CD4-positive, alpha-beta T cell (primary cell): ENCODE measurements at regions of chr3 and their contacts with region 1.

Region 1: GRCh38 chr3:63818281-63819150 is 583 bp upstream of the C3orf49 start:
- DNase-seq: peak; percentile 26 to 77 (median 49)
- ATAC-seq: peak; percentile 61
- H3K4me3 ChIP-seq: no peak overlapping the region
- H3K4me3 Mint-ChIP-seq: no peak overlapping the region
- H3K27ac ChIP-seq: no peak overlapping the region
- H3K27ac Mint-ChIP-seq: no peak overlapping the region
- H3K4me1 ChIP-seq: no peaks in the 10 kb centered on the region
- H3K4me1 Mint-ChIP-seq: peaks cover 6% of the 10 kb centered on the region
- H3K27me3 ChIP-seq: no peaks in the 10 kb centered on the region
- H3K27me3 Mint-ChIP-seq: no peaks in the 10 kb centered on the region
- CTCF ChIP-seq: peak; percentile 91

Region 2: GRCh38 chr3:62201438-62202035 is 1617.0 kb before region 1 on chr3:
- CTCF ChIA-PET with region 1: interaction called, 4 read pairs
- POLR2A ChIA-PET with region 1: no interaction called
- intact Hi-C with region 1: loop called (anchors 1 to 5 kb)
- DNase-seq: peak in 2 of 14 experiments; percentile 9 to 22
- ATAC-seq: no peak
- H3K4me3 ChIP-seq: no peak overlapping the region
- H3K4me3 Mint-ChIP-seq: no peak overlapping the region
- H3K27ac ChIP-seq: no peak overlapping the region
- H3K27ac Mint-ChIP-seq: no peak overlapping the region
- H3K4me1 ChIP-seq: no peaks in the 10 kb centered on the region
- H3K4me1 Mint-ChIP-seq: no peaks in the 10 kb centered on the region
- H3K27me3 ChIP-seq: no peaks in the 10 kb centered on the region
- H3K27me3 Mint-ChIP-seq: peaks cover 4% of the 10 kb centered on the region
- CTCF ChIP-seq: peak; percentile 45

Region 3: DNA sequence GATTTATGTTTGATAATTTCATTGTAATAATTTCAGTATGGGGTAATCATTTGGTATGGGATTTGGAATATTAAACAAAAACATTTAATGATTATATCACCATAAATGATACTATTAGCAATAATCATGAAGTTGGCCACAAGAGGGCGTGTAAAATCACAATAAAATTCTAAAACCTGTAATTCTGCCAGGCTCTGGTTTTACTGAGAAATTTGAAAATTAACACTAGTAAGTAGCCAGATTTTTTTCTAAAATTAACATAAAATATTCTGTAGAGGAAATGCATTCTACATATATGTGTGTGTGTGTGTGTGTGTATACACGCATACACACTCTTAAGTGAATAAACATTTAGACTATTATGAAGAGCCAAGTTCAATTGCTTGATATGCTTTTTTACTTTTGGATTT is 1485.7 kb before region 1 on chr3:
- CTCF ChIA-PET with region 1: no interaction called
- POLR2A ChIA-PET with region 1: no interaction called
- intact Hi-C with region 1: loop called (anchors 5 kb)
- DNase-seq: peak in 2 of 14 experiments; percentile 3 to 6
- ATAC-seq: no peak
- H3K4me3 ChIP-seq: no peak overlapping the region
- H3K4me3 Mint-ChIP-seq: no peak overlapping the region
- H3K27ac ChIP-seq: no peak overlapping the region
- H3K27ac Mint-ChIP-seq: no peak overlapping the region
- H3K4me1 ChIP-seq: no peaks in the 10 kb centered on the region
- H3K4me1 Mint-ChIP-seq: no peaks in the 10 kb centered on the region
- H3K27me3 ChIP-seq: no peaks in the 10 kb centered on the region
- H3K27me3 Mint-ChIP-seq: no peaks in the 10 kb centered on the region
- CTCF ChIP-seq: peak; percentile 51

Region 4: DNA sequence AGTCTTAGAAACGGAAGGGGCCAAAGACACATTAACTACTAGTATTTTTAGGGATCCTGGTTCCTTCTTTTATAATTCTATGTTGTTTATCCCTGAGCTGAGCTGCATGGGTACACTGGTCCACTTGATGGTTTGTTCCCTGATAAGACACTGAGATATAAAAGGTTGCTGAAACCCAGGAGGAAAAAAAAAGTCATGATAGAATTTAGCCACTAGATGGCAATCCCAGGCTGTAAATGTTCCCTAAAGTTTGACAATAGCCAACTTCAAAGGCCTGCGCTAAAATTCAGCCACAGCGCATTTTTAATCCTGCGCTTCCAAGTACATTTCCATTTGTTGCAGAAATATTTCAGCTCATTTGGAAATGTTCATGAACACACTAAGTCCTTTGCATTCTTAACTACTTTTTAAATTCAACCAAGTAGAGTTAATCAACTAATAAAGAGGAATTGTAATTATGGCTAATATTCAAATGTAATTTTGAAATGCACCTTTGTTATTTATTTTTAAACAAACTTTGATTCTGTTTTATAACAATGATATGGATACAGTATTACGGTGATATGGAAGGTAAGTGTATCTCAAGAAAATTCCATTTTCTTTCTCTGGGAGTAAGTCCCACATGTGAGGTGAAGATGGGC is 1195.8 kb before region 1 on chr3:
- CTCF ChIA-PET with region 1: no interaction called
- POLR2A ChIA-PET with region 1: no interaction called
- intact Hi-C with region 1: loop called in 1 of 2 experiments (anchors 5 kb)
- DNase-seq: peak in 3 of 14 experiments; percentile 12 to 26 (median 19)
- ATAC-seq: no peak
- H3K4me3 ChIP-seq: no peak overlapping the region
- H3K4me3 Mint-ChIP-seq: no peak overlapping the region
- H3K27ac ChIP-seq: no peak overlapping the region
- H3K27ac Mint-ChIP-seq: no peak overlapping the region
- H3K4me1 ChIP-seq: no peaks in the 10 kb centered on the region
- H3K4me1 Mint-ChIP-seq: no peaks in the 10 kb centered on the region
- H3K27me3 ChIP-seq: no peaks in the 10 kb centered on the region
- H3K27me3 Mint-ChIP-seq: peaks cover 10% of the 10 kb centered on the region
- CTCF ChIP-seq: no peak

Region 5: DNA sequence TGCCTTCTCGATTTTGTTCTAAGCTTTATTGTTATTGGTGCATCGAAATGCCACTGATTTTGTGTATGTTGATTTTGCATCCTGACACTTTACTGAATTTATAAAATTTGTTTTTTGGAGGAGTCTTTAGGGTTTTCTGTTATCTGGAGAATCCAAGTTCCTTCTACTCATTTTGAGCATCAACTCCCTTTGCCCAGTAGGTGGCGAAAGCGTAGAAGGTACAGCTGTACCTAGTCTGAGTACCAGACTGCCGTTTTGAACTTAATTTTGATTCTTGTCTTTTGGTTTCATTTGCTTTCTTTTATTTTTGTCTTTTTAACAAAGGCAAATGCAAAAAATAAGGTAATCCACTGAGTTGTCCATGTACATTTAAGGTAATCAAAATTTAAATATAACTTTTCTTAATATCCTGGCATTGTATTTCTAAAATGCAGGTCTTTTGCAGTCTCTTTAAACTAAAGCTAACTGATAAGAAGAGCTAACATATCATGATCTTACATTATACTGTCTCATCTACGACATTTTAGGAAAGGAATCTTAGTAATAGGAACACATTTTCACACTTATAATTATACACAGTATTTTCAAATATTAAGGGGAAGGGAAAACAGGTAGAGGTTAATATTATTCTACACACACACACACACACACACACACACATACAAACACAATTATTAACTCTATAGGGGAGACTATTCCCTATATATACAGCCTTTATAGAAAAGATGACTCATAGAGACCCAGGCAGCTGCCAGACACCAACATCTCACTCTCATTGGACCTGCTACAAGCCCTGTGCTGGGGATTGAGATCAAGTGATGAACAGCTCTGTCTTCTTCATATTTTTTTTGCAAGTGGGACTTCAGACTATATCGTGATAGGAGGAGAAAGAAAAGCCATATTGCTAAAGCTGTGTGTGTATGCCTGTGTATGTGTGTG is 468.7 kb before region 1 on chr3:
- CTCF ChIA-PET with region 1: no interaction called
- POLR2A ChIA-PET with region 1: no interaction called
- intact Hi-C with region 1: loop called in 1 of 2 experiments (anchors 2 kb)
- DNase-seq: peak in 4 of 14 experiments; percentile 5 to 41 (median 30)
- ATAC-seq: peak; percentile 37
- H3K4me3 ChIP-seq: no peak overlapping the region
- H3K4me3 Mint-ChIP-seq: no peak overlapping the region
- H3K27ac ChIP-seq: no peak overlapping the region
- H3K27ac Mint-ChIP-seq: no peak overlapping the region
- H3K4me1 ChIP-seq: no peaks in the 10 kb centered on the region
- H3K4me1 Mint-ChIP-seq: no peaks in the 10 kb centered on the region
- H3K27me3 ChIP-seq: peaks cover 0 to 4% of the 10 kb centered on the region in 2 experiments
- H3K27me3 Mint-ChIP-seq: peaks cover 32% of the 10 kb centered on the region
- CTCF ChIP-seq: peak; percentile 24

Region 6: DNA sequence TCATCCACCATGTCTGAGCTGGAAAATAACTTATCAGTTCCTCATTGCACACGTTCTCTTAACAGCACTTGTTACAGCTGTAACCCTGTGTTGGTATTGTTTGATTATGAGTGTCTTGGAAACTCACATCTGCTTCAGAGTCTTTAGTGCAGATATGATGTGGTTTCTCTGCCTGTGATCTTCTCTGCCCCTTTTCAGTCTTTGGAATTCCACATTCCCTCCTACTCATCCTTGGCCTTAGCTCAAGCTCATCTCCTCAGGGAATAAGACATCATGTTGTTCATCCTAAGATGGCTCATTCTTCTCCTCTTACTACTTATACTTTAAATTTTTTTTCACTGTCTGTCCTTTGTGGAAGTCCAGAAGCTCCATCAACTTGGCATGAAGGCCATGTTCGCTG is 462.7 kb before region 1 on chr3:
- CTCF ChIA-PET with region 1: no interaction called
- POLR2A ChIA-PET with region 1: no interaction called
- intact Hi-C with region 1: loop called in 1 of 2 experiments (anchors 2 kb)
- DNase-seq: no peak
- ATAC-seq: no peak
- H3K4me3 ChIP-seq: no peak overlapping the region
- H3K4me3 Mint-ChIP-seq: no peak overlapping the region
- H3K27ac ChIP-seq: no peak overlapping the region
- H3K27ac Mint-ChIP-seq: no peak overlapping the region
- H3K4me1 ChIP-seq: no peaks in the 10 kb centered on the region
- H3K4me1 Mint-ChIP-seq: no peaks in the 10 kb centered on the region
- H3K27me3 ChIP-seq: peaks cover 0 to 4% of the 10 kb centered on the region in 2 experiments
- H3K27me3 Mint-ChIP-seq: peaks cover 29% of the 10 kb centered on the region
- CTCF ChIP-seq: no peak

Region 7: GRCh38 chr3:63442918-63443317 is 375.6 kb before region 1 on chr3:
- CTCF ChIA-PET with region 1: no interaction called
- POLR2A ChIA-PET with region 1: no interaction called
- intact Hi-C with region 1: no loop called
- DNase-seq: no peak
- ATAC-seq: no peak
- H3K4me3 ChIP-seq: no peak overlapping the region
- H3K4me3 Mint-ChIP-seq: no peak overlapping the region
- H3K27ac ChIP-seq: no peak overlapping the region
- H3K27ac Mint-ChIP-seq: no peak overlapping the region
- H3K4me1 ChIP-seq: no peaks in the 10 kb centered on the region
- H3K4me1 Mint-ChIP-seq: no peaks in the 10 kb centered on the region
- H3K27me3 ChIP-seq: no peaks in the 10 kb centered on the region
- H3K27me3 Mint-ChIP-seq: no peaks in the 10 kb centered on the region
- CTCF ChIP-seq: no peak